Activated CD8-positive, alpha-beta T cell treated with anti-CD3 and anti-CD28 coated beads for 36 hours (primary cell): ENCODE measurements at regions of chr9 and their contacts with region 1.

Region 1: DNA sequence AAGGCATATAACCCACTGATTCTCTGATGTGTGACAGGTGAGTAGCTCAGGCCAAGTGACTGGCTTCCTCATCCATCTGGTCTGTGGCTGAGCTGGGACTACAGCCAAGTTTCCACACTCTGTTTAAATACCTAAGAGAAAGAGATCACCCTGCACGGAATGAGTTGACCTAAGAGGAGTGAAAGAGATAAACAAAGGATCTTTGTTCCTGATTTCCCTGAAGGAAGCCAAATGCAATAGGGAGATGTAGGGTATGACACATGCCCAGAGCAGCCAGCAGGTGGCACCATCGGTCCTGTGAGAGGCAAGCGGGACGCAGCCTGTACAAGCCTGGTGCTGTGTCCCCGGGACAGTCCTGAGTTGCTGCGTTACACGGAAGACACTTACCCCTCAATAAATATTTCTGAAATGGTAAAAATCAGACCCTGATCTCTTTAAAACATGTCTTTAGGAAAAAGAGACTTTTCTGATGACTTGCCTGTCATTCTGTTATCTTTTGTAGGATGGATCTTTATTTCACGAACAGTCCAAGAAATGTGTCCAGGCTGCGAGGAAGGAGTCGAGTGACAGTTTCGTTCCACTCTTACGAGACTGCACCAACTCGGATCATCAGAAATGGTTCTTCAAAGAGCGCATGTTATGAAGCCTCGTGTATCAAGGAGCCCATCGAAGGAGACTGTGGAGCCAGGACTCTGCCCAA is 41.1 kb downstream of the GALNT12 start:
- DNase-seq: peak; percentile 87
- ATAC-seq: peak; percentile 95
- H3K4me3 Mint-ChIP-seq: no peak overlapping the region
- H3K27ac Mint-ChIP-seq: no peak overlapping the region
- H3K4me1 Mint-ChIP-seq: peaks cover 11% of the 10 kb centered on the region
- H3K27me3 Mint-ChIP-seq: no peaks in the 10 kb centered on the region
- CTCF ChIP-seq: peak; percentile 95

Region 2: DNA sequence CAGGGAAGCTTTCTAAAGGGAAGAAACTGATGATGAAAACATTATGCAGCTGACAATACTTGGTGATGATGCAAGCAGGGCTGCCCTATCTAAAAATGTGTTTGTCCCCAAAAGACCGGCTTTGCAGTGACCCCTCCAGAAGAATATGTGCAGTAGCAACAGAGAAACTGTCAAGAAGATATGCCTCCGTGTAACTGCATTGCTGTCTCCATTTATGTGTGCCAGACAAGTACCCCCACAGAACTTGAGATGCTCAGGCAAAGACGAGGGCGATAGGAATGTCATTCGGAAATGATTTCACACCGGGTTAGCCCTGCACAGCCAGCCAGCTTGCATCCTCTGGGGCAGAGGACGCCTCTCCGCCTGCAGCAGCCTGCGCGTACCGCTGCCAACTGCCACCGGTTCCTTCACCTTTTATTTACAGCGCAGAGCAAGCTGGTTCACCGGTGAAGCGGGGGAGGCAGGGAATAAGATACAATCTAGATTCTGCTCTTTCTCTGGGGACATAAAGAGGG is 141.9 kb before region 1 on chr9:
- CTCF ChIA-PET with region 1: no interaction called
- POLR2A ChIA-PET with region 1: no interaction called
- intact Hi-C with region 1: no loop called
- DNase-seq: no peak
- ATAC-seq: no peak
- H3K4me3 Mint-ChIP-seq: no peak overlapping the region
- H3K27ac Mint-ChIP-seq: no peak overlapping the region
- H3K4me1 Mint-ChIP-seq: peaks cover 2% of the 10 kb centered on the region
- H3K27me3 Mint-ChIP-seq: peaks cover 63% of the 10 kb centered on the region
- CTCF ChIP-seq: no peak

Region 3: DNA sequence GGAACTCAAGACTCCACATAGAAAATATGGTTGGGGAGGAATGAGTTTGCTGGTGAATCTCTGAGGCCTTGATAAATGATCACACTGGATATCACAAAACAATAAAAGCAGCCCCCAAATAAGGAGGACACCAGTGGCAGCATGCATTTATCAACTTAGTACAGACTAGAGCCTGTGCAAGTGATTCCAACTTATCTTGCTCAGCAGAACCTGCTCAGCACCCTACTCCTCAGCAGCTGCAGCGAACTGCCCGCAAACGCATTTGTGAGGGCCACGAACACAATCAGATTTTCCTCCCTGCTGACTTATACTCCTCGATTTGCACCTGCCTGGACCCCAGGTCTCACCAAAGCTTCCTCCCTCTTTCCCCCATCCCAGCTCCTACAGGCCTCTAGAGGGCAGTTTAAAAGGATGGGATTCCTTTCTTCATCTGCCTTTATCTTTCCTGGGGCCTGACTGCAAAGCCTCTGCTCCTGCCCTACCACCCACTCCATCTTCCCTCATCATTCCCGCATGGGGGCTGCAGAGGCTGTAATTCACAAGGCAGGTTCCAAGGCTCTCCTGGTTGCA is 93.5 kb before region 1 on chr9:
- CTCF ChIA-PET with region 1: no interaction called
- POLR2A ChIA-PET with region 1: no interaction called
- intact Hi-C with region 1: no loop called
- DNase-seq: no peak
- ATAC-seq: no peak
- H3K4me3 Mint-ChIP-seq: no peak overlapping the region
- H3K27ac Mint-ChIP-seq: no peak overlapping the region
- H3K4me1 Mint-ChIP-seq: no peaks in the 10 kb centered on the region
- H3K27me3 Mint-ChIP-seq: no peaks in the 10 kb centered on the region
- CTCF ChIP-seq: no peak

Region 4: DNA sequence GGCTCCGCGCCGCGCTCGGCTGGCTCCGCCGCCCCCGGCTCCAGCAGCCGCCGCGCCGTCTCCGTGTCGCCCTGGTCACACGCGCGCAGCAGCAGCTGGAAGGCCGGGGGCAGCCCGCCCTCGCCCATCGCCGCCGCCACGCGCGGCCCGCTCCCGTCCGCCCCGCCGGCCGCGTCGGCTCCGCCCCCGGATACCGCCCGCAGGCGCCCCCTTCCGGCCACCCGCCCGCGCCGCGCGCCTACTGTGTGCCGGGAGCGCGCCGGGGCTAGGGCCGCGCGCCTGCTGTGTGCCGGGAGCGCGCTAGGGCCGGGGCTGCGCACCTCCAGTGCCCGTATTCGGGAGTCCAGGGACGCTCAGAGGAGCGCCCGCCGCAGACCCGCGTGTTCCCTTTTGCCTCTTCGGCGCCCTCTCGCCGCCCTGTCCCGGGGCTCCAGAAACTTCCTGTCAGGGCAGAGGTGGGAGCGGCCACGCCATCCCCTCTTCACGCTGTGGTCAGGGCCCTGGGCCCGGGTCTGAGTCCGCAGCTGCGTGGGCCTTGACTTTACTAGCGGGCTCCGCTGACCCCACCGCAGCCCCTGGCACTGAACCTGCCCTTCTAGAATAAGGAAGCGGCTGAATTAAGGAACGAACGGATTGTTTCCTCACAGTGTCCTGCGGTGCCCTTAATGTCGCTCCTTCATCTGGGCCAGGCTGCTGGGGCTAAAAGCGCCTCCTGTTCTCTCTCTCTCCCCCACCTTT is 52.1 kb before region 1 on chr9 and contains the start of gene ANKS6:
- CTCF ChIA-PET with region 1: no interaction called
- POLR2A ChIA-PET with region 1: no interaction called
- intact Hi-C with region 1: no loop called
- DNase-seq: peak; percentile 82
- ATAC-seq: peak; percentile 93
- H3K4me3 Mint-ChIP-seq: peak within 1 kb of the TSS; percentile 80
- H3K27ac Mint-ChIP-seq: peak within 1 kb of the TSS; percentile 72
- H3K4me1 Mint-ChIP-seq: peaks cover 21% of the 10 kb centered on the region
- H3K27me3 Mint-ChIP-seq: no peaks in the 10 kb centered on the region
- CTCF ChIP-seq: peak; percentile 30
- total RNA-seq, gene ANKS6: 16.6 to 16.9 TPM

Region 5: GRCh38 chr9:98826716-98827115 is 21.9 kb before region 1 on chr9:
- CTCF ChIA-PET with region 1: interaction called, 10 read pairs
- POLR2A ChIA-PET with region 1: no interaction called
- intact Hi-C with region 1: no loop called
- DNase-seq: no peak
- ATAC-seq: no peak
- H3K4me3 Mint-ChIP-seq: no peak overlapping the region
- H3K27ac Mint-ChIP-seq: no peak overlapping the region
- H3K4me1 Mint-ChIP-seq: no peaks in the 10 kb centered on the region
- H3K27me3 Mint-ChIP-seq: no peaks in the 10 kb centered on the region
- CTCF ChIP-seq: no peak

Region 6: GRCh38 chr9:98860871-98861293 is 12.3 kb after region 1 on chr9:
- CTCF ChIA-PET with region 1: interaction called, 57 read pairs
- POLR2A ChIA-PET with region 1: no interaction called
- intact Hi-C with region 1: no loop called
- DNase-seq: no peak
- ATAC-seq: no peak
- H3K4me3 Mint-ChIP-seq: no peak overlapping the region
- H3K27ac Mint-ChIP-seq: no peak overlapping the region
- H3K4me1 Mint-ChIP-seq: peaks cover 4% of the 10 kb centered on the region
- H3K27me3 Mint-ChIP-seq: peaks cover 19% of the 10 kb centered on the region
- CTCF ChIP-seq: no peak

Region 7: DNA sequence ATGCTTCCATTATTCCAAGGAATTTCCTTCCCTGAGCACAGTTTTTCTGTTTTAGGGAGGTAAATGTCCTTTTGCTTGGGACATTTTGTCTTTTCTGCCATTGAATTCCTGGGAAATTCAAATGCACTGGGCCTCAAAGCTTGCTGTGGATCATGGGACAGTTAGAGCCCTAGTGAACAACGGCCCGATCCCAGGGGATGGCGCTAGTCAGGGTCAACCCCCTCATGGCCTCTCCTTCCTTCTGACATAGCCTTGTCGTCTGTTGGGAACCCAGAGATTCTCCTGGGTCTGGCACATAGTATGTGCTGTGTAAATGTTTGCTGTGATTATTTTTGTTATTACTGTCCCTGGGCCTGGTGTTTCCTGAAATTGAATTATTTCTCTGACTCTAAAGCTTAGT is 64.4 kb after region 1 on chr9:
- CTCF ChIA-PET with region 1: interaction called, 10 read pairs
- POLR2A ChIA-PET with region 1: no interaction called
- intact Hi-C with region 1: no loop called
- DNase-seq: no peak
- ATAC-seq: no peak
- H3K4me3 Mint-ChIP-seq: no peak overlapping the region
- H3K27ac Mint-ChIP-seq: no peak overlapping the region
- H3K4me1 Mint-ChIP-seq: no peaks in the 10 kb centered on the region
- H3K27me3 Mint-ChIP-seq: no peaks in the 10 kb centered on the region
- CTCF ChIP-seq: no peak

Region 8: GRCh38 chr9:99012942-99013512 is 164.4 kb after region 1 on chr9:
- CTCF ChIA-PET with region 1: interaction called, 35 read pairs
- POLR2A ChIA-PET with region 1: no interaction called
- intact Hi-C with region 1: no loop called
- DNase-seq: peak; percentile 36
- ATAC-seq: peak; percentile 79
- H3K4me3 Mint-ChIP-seq: no peak overlapping the region
- H3K27ac Mint-ChIP-seq: peak overlapping the region; percentile 93
- H3K4me1 Mint-ChIP-seq: peaks cover 22% of the 10 kb centered on the region
- H3K27me3 Mint-ChIP-seq: no peaks in the 10 kb centered on the region
- CTCF ChIP-seq: peak; percentile 45